ENCODE measurements at regions of chr14 and their contacts with region 1.

Region 1: DNA sequence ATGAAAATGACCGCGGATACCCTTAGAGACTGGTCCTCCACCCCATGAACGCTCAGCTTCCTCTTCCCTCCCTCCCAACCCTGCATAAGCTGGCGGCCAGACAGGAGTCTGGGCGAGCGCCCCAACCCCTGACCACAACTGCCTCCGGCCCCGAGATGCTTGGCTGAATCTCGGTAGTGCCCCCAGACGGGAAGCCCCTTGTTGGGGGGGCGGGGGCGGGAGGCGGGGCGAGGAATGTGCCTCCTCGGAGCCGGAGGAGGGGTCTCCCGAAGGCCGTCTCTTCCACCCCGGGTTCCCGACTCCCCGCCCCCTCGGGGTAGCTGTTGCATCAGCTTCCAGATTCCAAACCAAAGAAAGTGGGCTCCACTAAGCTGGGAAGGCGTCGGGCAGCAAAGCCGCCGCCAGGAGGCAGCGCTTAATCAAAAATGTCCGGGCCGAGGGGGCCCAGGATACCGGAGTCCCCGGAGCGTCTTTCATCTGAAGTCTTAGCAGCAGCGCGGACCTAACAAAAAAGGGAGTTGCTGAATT is 7.1 kb upstream of the MRPL52 start:
- DNase-seq: peak; percentile 91
- H3K4me3 ChIP-seq: peak overlapping the region in 1 of 2 experiments; percentile 44; a peak in 1 of 4 replicates
- H3K27ac ChIP-seq: peak overlapping the region in 1 of 2 experiments; percentile 15; a peak in 1 of 4 replicates
- H3K4me1 ChIP-seq: peaks cover 8 to 13% of the 10 kb centered on the region in 2 experiments; a peak in 2 of 4 replicates
- H3K27me3 ChIP-seq: no peaks in the 10 kb centered on the region
- CTCF ChIP-seq: peak; percentile 84
- EP300 ChIP-seq: no peak
- RAD21 ChIP-seq: peak; percentile 95

Region 2: DNA sequence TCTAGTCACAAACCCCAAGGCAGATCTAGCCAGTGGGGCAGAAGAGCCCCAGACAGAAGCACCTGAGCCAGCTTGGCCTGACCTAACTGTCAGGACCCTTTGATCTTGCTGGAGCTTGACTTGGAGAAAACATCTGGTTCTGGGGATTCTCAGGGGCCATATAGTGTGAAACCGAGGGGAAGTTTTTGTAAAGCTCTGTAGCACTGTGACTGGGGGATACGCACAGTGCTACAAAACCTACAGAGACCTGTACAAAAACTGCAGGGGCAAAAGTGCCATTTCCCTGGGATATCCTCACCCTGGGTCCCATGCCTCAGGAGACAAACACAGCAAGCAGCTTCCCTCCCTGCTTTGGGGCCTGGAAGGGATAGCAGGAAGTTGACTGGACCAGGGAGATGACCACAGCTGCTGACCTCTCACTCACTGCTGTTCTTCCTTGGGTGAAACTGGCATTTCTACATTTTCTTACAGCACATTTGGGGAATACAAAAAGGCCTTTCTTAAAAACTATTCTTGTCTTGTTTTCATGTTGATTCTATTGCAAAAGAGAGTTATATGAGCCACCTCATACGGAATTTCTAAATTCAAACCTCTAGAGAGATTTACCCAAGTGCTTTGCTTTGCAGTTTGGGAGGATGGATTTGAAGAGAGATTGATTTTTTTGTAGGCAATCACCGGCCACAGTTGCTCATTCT is 373.6 kb before region 1 on chr14:
- CTCF ChIA-PET with region 1: no interaction called
- POLR2A ChIA-PET with region 1: no interaction called
- DNase-seq: no peak
- H3K4me3 ChIP-seq: no peak overlapping the region
- H3K27ac ChIP-seq: no peak overlapping the region
- H3K4me1 ChIP-seq: no peaks in the 10 kb centered on the region
- H3K27me3 ChIP-seq: peaks cover 36% of the 10 kb centered on the region; the same call in 1 of the 2 replicates
- CTCF ChIP-seq: no peak
- EP300 ChIP-seq: no peak
- RAD21 ChIP-seq: no peak

Region 3: DNA sequence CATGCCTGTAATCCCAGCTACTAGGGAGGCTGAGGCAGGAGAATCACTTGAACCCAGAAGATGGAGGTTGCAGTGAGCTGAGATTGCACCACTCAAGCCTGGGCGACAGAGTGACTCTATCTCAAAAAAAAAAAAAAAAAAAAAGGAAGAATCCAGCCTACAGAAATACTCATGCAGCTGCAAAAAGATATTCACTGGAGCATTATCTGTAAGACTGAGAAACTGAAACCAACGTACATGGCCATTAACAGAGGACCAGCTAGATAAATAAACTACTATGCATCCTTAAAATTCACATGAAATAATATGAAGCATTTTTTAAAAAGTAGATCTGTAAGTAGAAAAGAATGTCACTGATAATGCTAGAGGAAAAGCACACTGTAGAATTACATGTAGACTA is 10.9 kb before region 1 on chr14:
- CTCF ChIA-PET with region 1: interaction called, 10 read pairs
- POLR2A ChIA-PET with region 1: no interaction called
- DNase-seq: no peak
- H3K4me3 ChIP-seq: no peak overlapping the region
- H3K27ac ChIP-seq: no peak overlapping the region
- H3K4me1 ChIP-seq: no peaks in the 10 kb centered on the region
- H3K27me3 ChIP-seq: peaks cover 16% of the 10 kb centered on the region; the same call in 1 of the 2 replicates
- CTCF ChIP-seq: no peak
- EP300 ChIP-seq: no peak
- RAD21 ChIP-seq: no peak

Region 4: DNA sequence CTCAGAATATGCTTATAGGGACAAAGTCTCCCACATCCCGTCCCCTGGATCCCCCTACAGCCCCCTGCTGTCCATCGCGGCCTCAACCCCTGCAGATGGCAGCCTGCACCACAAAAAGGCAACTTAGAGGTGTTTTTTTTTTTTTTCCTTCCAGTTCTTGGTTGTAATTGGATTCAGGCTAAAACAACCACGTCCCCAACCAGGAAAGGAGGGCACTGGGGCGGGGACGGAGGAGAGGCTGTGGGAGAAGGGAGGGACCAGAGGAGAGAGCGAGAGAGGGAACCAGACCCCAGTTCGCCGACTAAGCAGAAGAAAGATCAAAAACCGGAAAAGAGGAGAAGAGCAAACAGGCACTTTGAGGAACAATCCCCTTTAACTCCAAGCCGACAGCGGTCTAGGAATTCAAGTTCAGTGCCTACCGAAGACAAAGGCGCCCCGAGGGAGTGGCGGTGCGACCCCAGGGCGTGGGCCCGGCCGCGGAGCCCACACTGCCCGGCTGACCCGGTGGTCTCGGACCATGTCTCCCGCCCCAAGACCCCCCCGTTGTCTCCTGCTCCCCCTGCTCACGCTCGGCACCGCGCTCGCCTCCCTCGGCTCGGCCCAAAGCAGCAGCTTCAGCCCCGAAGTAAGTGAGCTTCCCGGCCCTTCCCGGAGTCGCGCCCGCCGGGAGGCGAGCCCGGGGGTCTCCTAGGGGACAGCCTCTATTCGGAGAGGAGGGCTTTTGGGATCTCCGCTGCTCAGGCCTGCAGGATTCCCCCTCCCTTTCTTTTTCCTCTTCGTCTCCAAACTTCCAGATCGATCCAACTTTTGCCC is 13.9 kb after region 1 on chr14 and contains the start of gene MMP14:
- CTCF ChIA-PET with region 1: interaction called, 12 read pairs
- POLR2A ChIA-PET with region 1: interaction called, 3 read pairs
- DNase-seq: peak; percentile 71
- H3K4me3 ChIP-seq: peak within 1 kb of the TSS; percentile 54 to 71
- H3K27ac ChIP-seq: peak within 1 kb of the TSS in 1 of 2 experiments; percentile 64; a peak in 2 of 4 replicates
- H3K4me1 ChIP-seq: peaks cover 0 to 10% of the 10 kb centered on the region in 2 experiments; a peak in 1 of 4 replicates
- H3K27me3 ChIP-seq: no peaks in the 10 kb centered on the region
- CTCF ChIP-seq: peak; percentile 52
- EP300 ChIP-seq: no peak
- RAD21 ChIP-seq: peak; percentile 45
- polyA plus RNA-seq, gene MMP14: 139 and 142 TPM in 2 replicates

Region 5: DNA sequence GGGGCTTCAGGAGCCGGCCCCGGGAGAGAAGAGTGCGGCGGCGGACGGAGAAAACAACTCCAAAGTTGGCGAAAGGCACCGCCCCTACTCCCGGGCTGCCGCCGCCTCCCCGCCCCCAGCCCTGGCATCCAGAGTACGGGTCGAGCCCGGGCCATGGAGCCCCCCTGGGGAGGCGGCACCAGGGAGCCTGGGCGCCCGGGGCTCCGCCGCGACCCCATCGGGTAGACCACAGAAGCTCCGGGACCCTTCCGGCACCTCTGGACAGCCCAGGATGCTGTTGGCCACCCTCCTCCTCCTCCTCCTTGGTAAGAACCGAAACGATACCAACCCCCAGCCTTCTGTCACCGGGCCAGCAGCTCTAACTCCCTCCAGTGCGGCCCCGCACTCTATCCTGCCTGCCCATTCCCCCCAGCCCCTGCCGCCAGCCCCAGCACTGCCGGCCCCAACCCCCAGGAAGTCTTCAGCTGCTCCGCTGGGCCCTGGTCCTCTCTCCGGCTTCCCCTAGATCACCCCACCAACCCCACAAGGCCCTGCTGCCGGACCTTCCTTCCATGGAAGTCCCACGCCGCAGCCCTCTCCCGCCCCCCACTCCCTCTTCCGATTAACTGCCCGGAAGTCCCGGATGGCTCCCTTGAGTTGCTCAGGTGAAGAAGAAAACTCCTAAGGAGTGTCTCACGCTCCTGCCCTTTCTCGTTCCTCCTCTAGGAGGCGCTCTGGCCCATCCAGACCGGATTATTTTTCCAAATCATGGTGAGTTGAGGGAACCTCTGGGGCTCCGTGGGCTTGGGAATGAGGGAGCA is 49.6 kb after region 1 on chr14:
- CTCF ChIA-PET with region 1: interaction called, 28 read pairs
- POLR2A ChIA-PET with region 1: interaction called, 3 read pairs
- DNase-seq: peak; percentile 83
- H3K4me3 ChIP-seq: peak overlapping the region; percentile 77 to 93
- H3K27ac ChIP-seq: peak overlapping the region; percentile 83 to 87
- H3K4me1 ChIP-seq: peaks cover 8 to 17% of the 10 kb centered on the region in 2 experiments
- H3K27me3 ChIP-seq: no peaks in the 10 kb centered on the region
- CTCF ChIP-seq: peak; percentile 97
- EP300 ChIP-seq: no peak
- RAD21 ChIP-seq: peak; percentile 79

Region 6: DNA sequence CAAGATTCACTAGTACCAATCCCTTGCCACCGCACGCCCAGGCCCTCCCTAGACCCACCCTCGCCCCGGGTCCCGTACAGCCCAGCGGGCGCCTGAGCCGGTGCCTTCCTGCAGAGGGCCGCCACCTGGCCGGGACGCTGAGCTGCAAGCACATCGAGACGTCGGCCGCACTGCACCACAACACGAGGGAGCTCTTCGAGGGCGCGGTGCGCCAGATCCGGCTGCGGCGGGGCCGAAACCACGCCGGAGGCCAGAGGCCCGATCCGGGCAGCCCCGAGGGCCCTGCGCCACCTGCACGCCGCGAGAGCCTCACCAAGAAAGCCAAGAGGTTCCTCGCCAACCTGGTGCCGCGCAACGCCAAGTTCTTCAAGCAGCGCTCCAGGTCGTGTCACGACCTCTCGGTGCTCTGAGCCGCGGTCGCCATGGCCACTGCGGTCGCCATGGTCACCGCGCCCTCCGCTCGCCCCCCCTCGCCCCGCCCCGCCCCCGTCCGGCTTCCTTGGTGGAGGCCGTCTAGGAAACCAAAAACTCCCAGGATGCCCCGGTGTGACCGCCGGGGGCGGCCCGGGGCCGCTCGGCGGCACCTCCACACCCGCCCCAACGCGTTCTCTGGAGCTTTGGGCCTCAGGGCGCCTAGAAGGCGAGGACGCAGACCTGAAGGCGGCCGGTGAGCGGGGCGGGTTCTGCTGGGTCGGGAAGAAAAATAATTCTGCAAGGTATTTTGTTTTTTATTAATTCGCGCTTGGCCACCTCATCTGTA is 64.0 kb after region 1 on chr14:
- CTCF ChIA-PET with region 1: interaction called, 14 read pairs
- POLR2A ChIA-PET with region 1: no interaction called
- DNase-seq: peak; percentile 93
- H3K4me3 ChIP-seq: peak overlapping the region; percentile 63 to 82
- H3K27ac ChIP-seq: peak overlapping the region; percentile 75 to 92
- H3K4me1 ChIP-seq: peaks cover 8 to 45% of the 10 kb centered on the region in 2 experiments; a peak in 2 of 4 replicates
- H3K27me3 ChIP-seq: no peaks in the 10 kb centered on the region
- CTCF ChIP-seq: peak; percentile 15; the same call in 1 of the 2 replicates
- EP300 ChIP-seq: no peak
- RAD21 ChIP-seq: no peak